ENCODE measurements at regions of chr6 and their contacts with region 1.

Region 1: DNA sequence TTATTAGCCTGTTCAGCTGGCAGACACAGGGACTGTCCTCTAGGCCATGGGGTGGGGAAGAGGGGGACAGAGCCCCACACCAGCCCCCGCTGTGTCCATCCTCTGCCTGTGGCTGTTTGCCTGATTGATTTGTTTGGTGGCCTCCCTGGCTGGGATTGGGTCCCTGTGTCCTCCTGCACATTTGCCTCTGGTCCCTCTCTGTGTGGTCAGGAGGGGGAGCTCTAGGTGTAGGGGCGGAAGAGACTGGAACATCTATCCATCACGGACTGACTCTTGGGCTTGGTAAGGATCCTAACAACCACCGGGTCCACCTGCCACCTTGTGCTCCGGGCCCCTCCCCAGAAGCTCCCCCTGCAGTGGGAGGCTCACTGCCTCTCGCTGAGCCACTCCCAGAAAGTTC is 38.4 kb upstream of the CCDC167 start:
- DNase-seq: peak; percentile 54
- H3K27ac ChIP-seq: no peak overlapping the region
- CTCF ChIP-seq: no peak

Region 2: GRCh38 chr6:37406726-37407356 is 131.3 kb before region 1 on chr6:
- CTCF ChIA-PET with region 1: no interaction called
- POLR2A ChIA-PET with region 1: no interaction called
- DNase-seq: peak; percentile 45
- H3K27ac ChIP-seq: no peak overlapping the region
- CTCF ChIP-seq: no peak

Region 3: GRCh38 chr6:37566111-37566949 is 28.2 kb after region 1 on chr6:
- CTCF ChIA-PET with region 1: interaction called, 10 read pairs
- POLR2A ChIA-PET with region 1: no interaction called
- DNase-seq: peak; percentile 64
- H3K27ac ChIP-seq: no peak overlapping the region
- CTCF ChIP-seq: peak; percentile 88

Region 4: DNA sequence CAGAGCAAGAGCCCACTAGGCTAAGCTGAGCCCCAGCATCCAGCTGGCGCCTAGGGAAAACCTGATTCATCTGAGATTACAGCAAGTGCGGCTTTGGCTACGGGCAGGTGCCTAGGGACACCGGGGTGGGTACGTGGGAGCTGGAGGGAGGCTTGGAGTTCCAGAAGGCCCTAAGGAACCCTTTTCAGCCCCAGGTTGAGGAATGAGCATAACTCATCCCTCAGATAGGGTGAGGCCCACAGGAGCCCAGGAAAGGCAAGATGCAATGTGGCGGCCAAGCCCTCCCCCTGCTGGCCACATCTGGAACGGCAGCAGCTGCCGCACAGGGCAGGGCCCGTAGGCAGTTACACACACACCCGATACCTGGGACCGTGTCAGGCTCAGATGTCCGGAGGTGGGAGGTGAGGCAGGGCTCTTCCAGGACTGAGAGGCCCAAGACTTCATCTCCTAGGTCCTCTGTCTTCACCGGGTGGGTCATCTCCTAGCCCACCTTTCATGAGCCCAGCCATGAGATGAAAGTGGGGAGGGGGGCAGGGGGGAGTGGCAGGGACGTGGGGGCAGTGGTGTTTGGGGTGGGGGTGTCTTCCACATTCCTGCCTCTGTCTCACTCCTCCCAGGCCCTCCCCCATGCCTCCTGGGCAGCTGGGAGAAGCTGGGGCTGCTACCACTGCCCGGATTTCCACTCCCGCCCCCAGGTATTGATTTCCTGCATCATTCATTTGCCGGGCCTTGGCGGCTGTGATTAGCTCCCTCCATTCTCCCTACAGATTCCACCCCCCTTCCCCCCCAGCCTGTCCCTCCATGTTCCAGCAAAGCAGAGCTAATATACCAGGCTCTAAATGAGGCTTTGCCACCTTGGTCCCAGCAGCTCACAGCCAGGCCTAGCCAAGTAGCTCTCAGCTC is 154.0 kb after region 1 on chr6:
- CTCF ChIA-PET with region 1: interaction called, 13 read pairs
- POLR2A ChIA-PET with region 1: no interaction called
- DNase-seq: peak; percentile 74
- H3K27ac ChIP-seq: no peak overlapping the region
- CTCF ChIP-seq: peak; percentile 91

Region 5: GRCh38 chr6:37745748-37746147 is 207.6 kb after region 1 on chr6:
- CTCF ChIA-PET with region 1: no interaction called
- POLR2A ChIA-PET with region 1: no interaction called
- DNase-seq: no peak
- H3K27ac ChIP-seq: no peak overlapping the region
- CTCF ChIP-seq: no peak

Measured in RWPE1 (cell line).